GM12878 (cell line): ENCODE measurements at regions of chr12 and their contacts with region 1.

Region 1: GRCh38 chr12:1634590-1635191 is 5.7 kb downstream of the WNT5B start:
- DNase-seq: no peak
- ATAC-seq: peak; percentile 82
- H3K4me3 ChIP-seq: no peak overlapping the region
- H3K27ac ChIP-seq: no peak overlapping the region
- H3K4me1 ChIP-seq: 0 out of 2 replicates have a peak, but pooled peaks cover 6% of the 10 kb centered on the region
- H3K27me3 ChIP-seq: peaks cover 2 to 4% of the 10 kb centered on the region in 2 experiments; a peak in 2 of 4 replicates
- CTCF ChIP-seq: peak; percentile 79 to 83 (median 82)
- EP300 ChIP-seq: no peak
- POLR2A ChIP-seq: no peak
- RAD21 ChIP-seq: peak; percentile 72

Region 2: GRCh38 chr12:1605129-1606020 is 29.3 kb before region 1 on chr12:
- CTCF ChIA-PET with region 1: interaction called, 21 read pairs
- POLR2A ChIA-PET with region 1: interaction called, 5 read pairs
- RAD21 ChIA-PET with region 1: interaction called, 13 read pairs
- SMC1A ChIA-PET with region 1: interaction called, 5 read pairs
- in situ Hi-C with region 1: no loop called
- intact Hi-C with region 1: no loop called
- DNase-seq: no peak
- ATAC-seq: peak; percentile 73
- H3K4me3 ChIP-seq: peak overlapping the region; percentile 61; the same call in 1 of the 2 replicates
- H3K27ac ChIP-seq: peak overlapping the region; percentile 79
- H3K4me1 ChIP-seq: peaks cover 48% of the 10 kb centered on the region
- H3K27me3 ChIP-seq: no peaks in the 10 kb centered on the region
- CTCF ChIP-seq: peak; percentile 75 to 93 (median 79)
- EP300 ChIP-seq: no peak
- POLR2A ChIP-seq: no peak; the same call in 1 of the 2 replicates
- RAD21 ChIP-seq: peak; percentile 75

Region 3: DNA sequence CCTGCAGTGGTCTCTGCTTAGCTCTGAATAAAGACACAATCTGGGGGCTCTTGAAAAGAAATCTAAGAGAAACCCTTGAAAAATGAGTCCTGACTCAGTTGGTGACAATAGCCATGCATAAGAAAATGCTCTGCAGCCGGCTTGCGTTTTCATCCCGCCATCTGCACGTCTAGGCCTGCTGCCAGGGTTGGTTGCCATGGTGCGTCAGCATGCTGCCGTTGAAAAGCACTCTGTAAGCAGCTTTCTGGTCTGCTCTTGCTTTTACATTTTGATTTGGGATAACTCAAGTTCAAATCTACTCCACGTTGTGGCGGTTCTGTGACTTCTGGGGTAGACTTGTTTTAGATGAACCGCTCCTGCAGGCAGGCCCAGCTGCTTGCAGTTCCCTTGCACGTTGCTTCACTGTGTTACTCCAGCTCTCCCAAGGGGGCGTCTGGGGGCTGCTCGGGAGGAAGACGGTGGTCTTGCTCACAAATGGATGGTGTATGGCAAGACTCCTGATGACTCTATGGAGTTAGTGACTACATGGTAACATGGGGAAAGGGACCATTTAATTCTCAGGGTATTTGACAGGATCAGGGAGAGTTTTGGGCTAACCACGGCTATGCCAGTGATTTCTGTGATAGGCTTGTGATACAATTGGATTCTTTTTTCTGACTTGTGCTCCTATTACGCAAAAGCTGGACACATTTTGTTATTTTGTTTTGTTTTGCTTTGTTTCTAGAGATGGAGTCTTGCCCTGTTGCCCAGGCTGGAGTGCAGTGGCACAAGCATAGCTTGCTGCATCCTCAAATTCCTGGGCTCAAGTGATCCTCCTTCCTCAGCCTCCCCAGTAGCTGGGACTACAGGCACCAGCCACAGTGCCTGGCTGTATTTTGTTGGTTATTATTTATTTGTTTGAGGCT is 10.1 kb after region 1 on chr12:
- CTCF ChIA-PET with region 1: interaction called, 110 read pairs
- POLR2A ChIA-PET with region 1: no interaction called
- RAD21 ChIA-PET with region 1: interaction called, 6 read pairs
- SMC1A ChIA-PET with region 1: interaction called, 17 read pairs
- in situ Hi-C with region 1: no loop called
- intact Hi-C with region 1: no loop called
- DNase-seq: no peak
- ATAC-seq: no peak
- H3K4me3 ChIP-seq: no peak overlapping the region
- H3K27ac ChIP-seq: no peak overlapping the region
- H3K4me1 ChIP-seq: no peaks in the 10 kb centered on the region
- H3K27me3 ChIP-seq: no peaks in the 10 kb centered on the region
- CTCF ChIP-seq: no peak
- EP300 ChIP-seq: no peak
- POLR2A ChIP-seq: no peak
- RAD21 ChIP-seq: no peak

Region 4: DNA sequence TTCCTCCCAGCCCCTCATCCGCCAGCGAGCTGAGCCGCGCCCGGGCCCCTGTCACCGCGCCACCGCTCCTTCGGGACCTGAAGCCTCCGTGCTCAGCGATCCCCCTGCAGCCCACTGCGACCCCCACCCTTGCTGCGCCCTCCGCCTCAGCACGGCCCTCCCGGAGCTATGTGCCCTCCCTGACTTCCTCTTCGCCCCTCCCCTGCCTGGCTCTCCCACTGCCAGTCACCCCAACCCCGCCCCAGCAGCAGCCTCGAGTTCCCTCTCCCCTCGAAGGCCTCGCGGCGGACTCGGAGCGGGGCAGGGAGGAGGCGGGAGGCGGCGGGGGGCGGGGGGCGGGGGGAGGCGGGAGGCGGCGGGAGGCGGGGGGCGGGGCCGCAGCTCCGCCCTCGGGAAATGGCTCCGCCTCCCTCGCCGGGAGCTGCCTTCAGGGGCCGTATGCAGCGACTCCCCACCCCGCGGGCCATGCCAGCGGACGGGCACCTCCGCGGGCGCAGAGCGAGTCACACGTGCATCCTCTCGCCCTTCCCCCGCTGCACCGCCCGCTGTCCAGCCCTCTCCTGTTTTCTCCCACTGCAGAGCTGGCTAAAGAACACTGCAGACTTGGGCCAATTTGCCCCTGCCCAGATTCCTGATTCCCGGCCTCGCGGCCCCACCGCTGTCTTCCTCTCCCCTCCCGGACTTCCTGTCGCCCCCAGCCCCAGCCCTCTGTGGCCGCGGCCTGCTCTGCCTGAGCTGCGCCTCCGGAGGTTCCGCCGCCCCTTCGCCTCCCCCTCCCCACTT is 27.1 kb after region 1 on chr12:
- CTCF ChIA-PET with region 1: interaction called, 10 read pairs
- POLR2A ChIA-PET with region 1: no interaction called
- RAD21 ChIA-PET with region 1: no interaction called
- SMC1A ChIA-PET with region 1: interaction called, 3 read pairs
- in situ Hi-C with region 1: no loop called
- intact Hi-C with region 1: no loop called
- DNase-seq: peak; percentile 43
- ATAC-seq: peak; percentile 96
- H3K4me3 ChIP-seq: peak overlapping the region; percentile 67; the same call in 1 of the 2 replicates
- H3K27ac ChIP-seq: no peak overlapping the region
- H3K4me1 ChIP-seq: no peaks in the 10 kb centered on the region
- H3K27me3 ChIP-seq: no peaks in the 10 kb centered on the region
- CTCF ChIP-seq: no peak
- EP300 ChIP-seq: no peak
- POLR2A ChIP-seq: peak; percentile 80
- RAD21 ChIP-seq: no peak

Region 5: GRCh38 chr12:1939801-1940607 is 305.3 kb after region 1 on chr12:
- CTCF ChIA-PET with region 1: interaction called, 20 read pairs
- POLR2A ChIA-PET with region 1: no interaction called
- RAD21 ChIA-PET with region 1: interaction called, 7 read pairs
- SMC1A ChIA-PET with region 1: interaction called, 11 read pairs
- in situ Hi-C with region 1: no loop called
- intact Hi-C with region 1: loop called (anchors 5 kb)
- DNase-seq: peak; percentile 45
- ATAC-seq: peak; percentile 99
- H3K4me3 ChIP-seq: no peak overlapping the region
- H3K27ac ChIP-seq: no peak overlapping the region
- H3K4me1 ChIP-seq: no peaks in the 10 kb centered on the region
- H3K27me3 ChIP-seq: no peaks in the 10 kb centered on the region
- CTCF ChIP-seq: peak; percentile 87 to 93 (median 92); a peak in 5 of 6 replicates
- EP300 ChIP-seq: no peak
- POLR2A ChIP-seq: no peak
- RAD21 ChIP-seq: peak; percentile 94

Region 6: GRCh38 chr12:2477009-2477766 is 842.5 kb after region 1 on chr12:
- CTCF ChIA-PET with region 1: no interaction called
- POLR2A ChIA-PET with region 1: no interaction called
- RAD21 ChIA-PET with region 1: no interaction called
- SMC1A ChIA-PET with region 1: no interaction called
- in situ Hi-C with region 1: no loop called
- intact Hi-C with region 1: no loop called
- DNase-seq: no peak
- ATAC-seq: no peak
- H3K4me3 ChIP-seq: no peak overlapping the region
- H3K27ac ChIP-seq: no peak overlapping the region
- H3K4me1 ChIP-seq: no peaks in the 10 kb centered on the region
- H3K27me3 ChIP-seq: no peaks in the 10 kb centered on the region; a peak in 2 of 4 replicates
- CTCF ChIP-seq: no peak
- EP300 ChIP-seq: no peak
- POLR2A ChIP-seq: no peak
- RAD21 ChIP-seq: no peak